GM13977 (cell line): ENCODE measurements at regions of chr3 and their contacts with region 1.

Region 1: GRCh38 chr3:195147649-195148095 is 123.3 kb downstream of the XXYLT1 start:
- DNase-seq: peak; percentile 82
- CTCF ChIP-seq: no peak

Region 2: GRCh38 chr3:195271116-195271858 is 123.6 kb after region 1 on chr3 and contains the start of gene XXYLT1:
- in situ Hi-C with region 1: no loop called
- DNase-seq: peak; percentile 95
- CTCF ChIP-seq: peak; percentile 97

Region 3: DNA sequence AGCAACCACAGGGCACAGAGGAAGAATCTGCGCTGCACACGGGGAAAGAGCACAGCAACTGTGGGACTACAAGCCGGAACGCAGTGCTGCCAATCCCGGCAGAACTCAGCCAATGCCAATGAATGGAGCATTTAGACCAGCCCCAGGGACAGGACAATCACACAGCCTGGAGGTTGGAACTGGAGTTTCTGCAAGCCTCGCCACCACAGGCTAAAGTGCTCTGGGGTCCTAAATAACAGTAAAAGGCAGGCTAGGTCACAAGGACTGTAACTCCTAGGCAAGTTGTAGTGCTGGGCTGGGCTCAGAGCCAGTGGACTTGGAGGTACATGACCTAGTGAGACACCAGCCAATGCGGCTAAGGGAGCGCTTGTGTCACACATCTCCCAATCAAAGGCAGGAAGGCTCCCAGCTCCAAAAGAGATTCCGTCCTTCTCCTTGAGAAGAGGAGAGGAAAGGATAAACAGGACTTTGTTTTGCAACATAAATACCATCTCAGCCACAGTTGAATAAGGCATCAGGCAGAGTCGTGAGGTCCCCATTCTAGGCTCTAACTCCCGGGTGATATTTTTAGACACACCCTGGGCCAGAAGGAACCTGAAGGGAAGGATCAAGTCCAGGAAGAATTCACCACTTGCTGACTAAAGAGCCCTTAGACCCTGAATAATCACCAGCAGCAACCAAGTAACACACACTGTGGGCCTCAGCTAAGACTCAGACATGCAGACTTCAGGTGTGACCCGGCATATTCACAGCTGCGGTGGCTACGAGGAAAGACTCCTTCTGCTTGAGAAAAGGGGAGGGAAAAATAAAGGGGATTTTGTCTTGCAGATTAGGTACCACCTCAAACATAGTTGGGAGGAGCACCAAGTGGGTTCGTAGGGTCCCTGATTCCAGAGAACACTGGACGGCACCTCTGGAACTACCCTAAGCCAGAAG is 208.7 kb after region 1 on chr3:
- in situ Hi-C with region 1: no loop called
- DNase-seq: no peak
- CTCF ChIP-seq: no peak

Region 4: GRCh38 chr3:195542698-195543499 is 395.2 kb after region 1 on chr3 and contains the start of gene PPP1R2:
- in situ Hi-C with region 1: loop called (anchors 25 kb)
- DNase-seq: peak; percentile 95
- CTCF ChIP-seq: no peak